ENCODE measurements at regions of chr5 and their contacts with region 1.

Region 1: DNA sequence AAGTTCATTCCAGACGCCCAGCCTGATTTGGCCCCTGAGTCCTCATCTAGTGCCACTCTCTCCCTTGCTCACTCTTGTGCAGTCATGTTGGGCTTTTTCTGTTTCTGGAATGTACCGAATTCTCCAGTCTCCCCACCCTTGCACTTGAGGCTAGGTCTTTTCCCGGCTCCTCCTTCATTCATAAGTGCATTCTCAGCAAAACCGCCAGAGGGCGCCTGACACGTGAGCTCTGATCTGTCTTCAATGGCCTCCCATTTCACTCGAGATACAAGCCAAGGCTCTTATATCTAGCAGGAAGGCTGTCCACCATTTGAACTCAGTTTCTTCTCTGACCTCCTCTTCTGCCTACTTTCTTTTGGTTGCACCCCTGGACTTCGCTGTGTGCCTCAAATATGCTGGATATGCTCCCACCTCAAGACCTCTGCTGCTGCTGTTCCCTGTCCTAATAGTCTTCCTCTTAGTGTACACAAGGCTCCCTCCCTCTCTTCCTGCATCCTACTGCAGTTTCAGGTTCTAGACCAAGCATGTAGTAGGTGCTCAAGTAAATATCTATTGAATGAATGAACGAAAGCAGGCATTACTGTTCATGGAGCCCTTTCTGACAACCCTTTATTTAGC is 568.1 kb upstream of the WWC1 start:
- DNase-seq: peak; percentile 77
- ATAC-seq: peak; percentile 92

Region 2: DNA sequence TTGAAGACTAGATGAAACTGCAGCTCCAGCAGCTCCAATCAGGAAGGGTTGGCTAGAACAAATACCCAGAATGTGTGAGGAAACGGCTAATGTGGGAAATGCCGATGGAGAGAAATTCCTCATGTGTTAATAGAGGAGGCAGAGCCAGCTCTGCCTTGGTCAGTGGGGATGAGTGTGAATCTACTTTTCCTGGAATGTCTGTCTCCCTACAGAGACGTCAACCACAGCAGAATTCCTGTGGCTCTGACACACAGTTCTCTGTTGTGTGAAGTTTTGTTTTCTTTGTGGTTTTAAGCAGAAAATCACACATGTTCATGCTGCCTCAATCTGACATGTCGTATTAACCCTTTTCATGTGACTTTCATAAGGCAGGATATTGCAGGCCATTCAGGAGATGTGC is 91.5 kb after region 1 on chr5:
- intact Hi-C with region 1: no loop called
- DNase-seq: no peak
- ATAC-seq: no peak

Region 3: GRCh38 chr5:167835146-167835545 is 111.8 kb after region 1 on chr5:
- intact Hi-C with region 1: no loop called
- DNase-seq: no peak
- ATAC-seq: no peak

Region 4: DNA sequence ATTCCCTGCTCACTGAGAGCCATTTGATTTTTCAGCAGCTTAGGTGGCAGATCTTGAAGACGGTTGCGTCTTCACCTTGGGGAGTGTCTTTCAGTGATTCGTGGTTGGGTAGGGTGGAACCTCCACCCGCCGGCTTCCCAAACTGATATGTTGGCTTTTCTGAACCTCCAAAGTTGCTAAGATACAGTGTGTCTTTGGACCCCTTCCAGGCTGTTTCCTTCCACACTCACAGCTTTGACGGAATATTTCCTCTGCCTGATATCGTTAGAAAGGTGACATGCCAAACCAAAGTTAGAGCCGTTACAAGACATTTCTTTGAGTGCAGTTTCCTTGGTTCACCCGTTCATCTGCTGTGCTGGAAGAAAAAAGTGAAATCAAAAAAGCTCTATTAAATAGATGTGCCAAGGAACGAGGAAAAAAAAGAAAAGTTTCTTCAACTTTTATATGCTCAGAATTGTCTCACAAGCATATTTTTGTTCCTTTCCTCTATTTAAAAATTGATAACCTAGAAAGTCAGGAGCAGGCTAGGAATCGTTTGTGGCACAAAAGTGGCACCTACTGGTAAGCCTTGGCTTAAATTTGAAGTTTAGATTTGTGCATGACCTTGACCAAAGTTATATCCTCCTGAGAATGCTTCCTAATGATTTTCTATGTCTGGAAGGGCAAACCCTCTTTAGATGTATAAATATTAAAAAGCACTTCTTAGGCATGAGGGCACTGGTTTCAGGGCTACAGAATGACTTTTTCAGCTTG is 297.4 kb after region 1 on chr5:
- intact Hi-C with region 1: loop called (anchors 10 kb)
- DNase-seq: no peak
- ATAC-seq: peak; percentile 19

Region 5: DNA sequence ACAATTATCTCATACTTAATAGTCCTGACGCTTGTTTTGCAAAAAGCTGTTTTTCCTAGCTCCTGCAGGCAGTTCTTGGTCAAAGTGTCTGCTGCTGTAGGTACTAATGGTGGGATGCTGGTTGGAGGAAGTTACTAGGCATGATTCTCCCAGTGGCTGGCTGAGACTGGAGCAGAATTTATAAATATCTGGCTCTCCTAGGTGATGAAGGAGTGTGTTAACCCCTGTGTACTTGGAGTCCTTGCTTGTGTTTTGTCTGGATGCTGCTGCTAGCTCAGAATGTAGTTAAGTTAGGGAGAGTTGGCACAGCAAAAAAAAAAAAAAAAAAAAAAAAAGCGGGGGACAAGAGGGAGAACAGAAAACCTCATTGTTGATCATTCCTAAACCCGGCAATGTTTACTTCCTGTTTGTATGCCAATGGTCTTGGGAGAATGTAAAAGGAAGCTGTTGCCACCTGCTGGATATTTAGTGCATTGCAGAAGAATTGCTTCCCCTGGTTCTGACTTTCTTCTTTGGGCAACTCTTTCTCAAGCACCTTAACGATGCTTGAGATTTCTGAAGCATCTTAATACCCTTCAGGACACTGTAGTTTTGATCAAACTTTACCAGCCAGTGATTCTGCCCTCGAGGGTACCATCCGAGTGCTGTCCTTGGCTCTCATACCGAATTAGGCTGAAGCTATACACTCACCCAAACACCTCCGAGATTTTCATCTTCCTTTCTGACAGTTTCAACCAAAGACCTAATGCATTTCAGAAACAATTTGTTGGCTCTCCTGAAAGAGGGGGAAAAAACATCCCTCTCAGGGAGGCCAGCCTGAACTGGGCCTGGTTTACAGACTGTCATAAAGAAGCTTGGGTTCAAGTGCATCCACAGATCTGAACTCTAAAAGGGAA is 496.4 kb after region 1 on chr5:
- intact Hi-C with region 1: loop called (anchors 5 kb)
- DNase-seq: no peak
- ATAC-seq: peak; percentile 62